BJ (cell line): ENCODE measurements at regions of chr10 and their contacts with region 1.

Region 1: DNA sequence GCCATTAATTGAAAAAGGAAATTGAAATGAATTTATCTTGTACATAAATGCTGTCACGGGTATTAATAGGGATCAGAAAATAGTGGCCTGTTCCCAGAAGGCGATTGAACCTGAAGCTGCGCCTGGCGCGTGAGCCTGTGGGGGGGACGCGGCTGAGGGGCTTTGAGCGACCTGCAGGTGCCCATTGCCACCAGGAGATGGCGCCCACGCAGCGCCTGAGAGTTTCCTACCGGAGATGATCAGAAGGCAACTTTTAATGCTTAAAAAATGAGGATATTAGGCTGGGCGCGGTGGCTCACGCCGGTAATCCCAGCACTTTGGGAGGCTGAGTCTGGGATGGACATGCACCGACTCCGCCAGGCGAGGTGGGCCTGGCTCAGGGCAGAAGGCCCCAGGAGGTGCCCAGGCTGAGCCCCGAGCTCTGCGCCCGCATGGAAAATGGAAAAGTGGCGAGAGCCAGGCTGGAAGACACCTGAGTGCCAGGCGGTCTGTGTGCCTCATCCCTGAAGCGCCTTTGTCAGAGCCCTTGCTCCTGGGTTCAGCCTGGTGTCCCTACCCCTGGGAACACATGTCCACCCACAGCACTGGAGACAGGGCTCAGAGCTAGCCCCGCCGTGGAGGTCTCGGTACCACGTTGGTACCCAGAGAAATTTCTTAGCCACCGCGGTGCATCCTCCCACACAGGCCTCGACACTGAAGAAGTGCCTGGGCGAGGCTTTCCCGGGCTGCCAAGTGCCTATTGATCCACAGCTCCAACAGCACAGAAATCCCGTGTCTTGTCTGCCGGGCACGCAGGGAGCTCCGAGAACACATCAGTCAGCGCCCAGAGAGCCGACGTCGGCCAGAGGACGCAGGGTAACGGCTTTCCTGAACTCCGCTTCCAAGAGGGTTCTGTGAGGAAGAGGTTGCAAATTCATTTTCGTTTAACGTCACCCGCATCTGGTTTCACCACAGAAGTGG is 117.4 kb downstream of the INPP5A start:
- DNase-seq: no peak
- H3K4me3 ChIP-seq: no peak overlapping the region
- H3K27me3 ChIP-seq: no peaks in the 10 kb centered on the region
- CTCF ChIP-seq: peak; percentile 96

Region 2: DNA sequence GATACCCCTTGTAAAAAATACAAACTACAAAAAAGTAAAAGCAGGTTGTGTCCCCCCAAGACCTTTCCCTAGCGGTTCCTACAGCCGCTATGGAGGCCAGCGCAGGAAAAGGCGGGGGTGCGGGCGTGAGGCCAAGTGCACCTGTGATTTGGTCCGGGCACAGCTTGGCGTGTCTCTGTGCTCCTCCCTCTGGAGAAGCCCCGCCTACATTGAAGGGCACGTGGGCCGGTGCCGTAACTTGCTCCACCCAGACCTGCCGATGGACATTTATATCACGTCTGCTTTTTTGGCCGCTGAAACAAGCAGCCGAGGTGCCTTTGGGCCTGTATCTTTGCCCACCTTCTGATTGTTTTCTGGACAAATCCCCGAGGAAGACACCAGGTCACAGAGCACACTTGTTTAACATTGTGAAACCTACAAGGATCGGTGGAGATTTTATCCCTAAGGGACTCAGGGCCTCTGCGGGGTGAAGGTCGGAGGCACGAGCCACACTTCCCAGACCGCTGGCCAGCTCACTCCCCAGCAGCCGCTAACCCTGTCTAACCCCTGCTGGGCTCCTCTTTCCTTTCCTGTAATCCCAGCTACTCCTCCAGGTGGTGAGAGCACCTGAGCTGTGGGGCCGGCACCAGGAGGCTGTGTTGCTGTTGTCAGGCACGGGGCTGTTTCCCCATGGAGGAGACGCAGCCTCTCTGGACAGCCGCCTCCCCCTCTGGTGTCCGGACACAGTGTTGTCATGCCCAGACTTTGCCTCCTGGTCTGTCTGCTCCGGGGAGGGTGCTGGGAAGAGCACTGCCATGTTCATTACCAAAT is 136.2 kb before region 1 on chr10:
- CTCF ChIA-PET with region 1: no interaction called
- POLR2A ChIA-PET with region 1: no interaction called
- DNase-seq: no peak
- H3K4me3 ChIP-seq: no peak overlapping the region
- H3K27me3 ChIP-seq: no peaks in the 10 kb centered on the region
- CTCF ChIP-seq: no peak

Region 3: DNA sequence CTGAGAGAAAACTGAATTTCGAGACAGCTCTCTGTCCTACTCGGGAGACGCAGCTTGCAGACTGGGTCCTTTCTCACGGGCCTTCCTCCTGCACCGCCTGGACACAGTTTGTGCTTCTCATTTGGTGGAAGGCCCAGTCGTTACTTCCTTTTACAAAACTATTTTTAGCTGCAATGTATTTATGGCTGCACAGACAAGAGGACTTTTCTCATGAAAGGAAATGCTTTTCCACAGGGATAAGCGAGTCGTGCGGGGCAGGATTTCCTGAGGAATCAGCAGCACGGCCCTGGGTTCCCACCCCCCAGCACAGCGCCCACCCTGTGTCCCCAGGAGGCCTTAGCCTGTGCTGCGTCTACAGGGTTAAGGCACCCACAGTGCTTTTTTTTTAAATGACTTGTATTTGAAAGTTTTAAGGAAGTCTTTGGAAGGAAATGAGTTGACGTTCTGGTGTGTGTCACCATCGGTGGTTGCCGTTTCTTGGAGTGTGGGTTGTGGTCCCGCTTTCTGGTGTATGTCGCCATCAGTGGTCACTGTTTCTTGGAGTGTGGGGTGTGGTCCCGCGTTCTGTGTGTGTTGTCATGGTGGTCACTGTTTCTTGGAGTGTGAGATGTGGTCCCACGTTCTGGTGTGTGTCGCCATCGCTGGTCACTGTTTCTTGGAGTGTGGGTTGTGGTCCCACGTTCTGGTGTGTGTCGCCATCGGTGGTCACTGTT is 66.5 kb before region 1 on chr10:
- CTCF ChIA-PET with region 1: no interaction called
- POLR2A ChIA-PET with region 1: no interaction called
- DNase-seq: no peak
- H3K4me3 ChIP-seq: no peak overlapping the region
- H3K27me3 ChIP-seq: no peaks in the 10 kb centered on the region
- CTCF ChIP-seq: no peak

Region 4: DNA sequence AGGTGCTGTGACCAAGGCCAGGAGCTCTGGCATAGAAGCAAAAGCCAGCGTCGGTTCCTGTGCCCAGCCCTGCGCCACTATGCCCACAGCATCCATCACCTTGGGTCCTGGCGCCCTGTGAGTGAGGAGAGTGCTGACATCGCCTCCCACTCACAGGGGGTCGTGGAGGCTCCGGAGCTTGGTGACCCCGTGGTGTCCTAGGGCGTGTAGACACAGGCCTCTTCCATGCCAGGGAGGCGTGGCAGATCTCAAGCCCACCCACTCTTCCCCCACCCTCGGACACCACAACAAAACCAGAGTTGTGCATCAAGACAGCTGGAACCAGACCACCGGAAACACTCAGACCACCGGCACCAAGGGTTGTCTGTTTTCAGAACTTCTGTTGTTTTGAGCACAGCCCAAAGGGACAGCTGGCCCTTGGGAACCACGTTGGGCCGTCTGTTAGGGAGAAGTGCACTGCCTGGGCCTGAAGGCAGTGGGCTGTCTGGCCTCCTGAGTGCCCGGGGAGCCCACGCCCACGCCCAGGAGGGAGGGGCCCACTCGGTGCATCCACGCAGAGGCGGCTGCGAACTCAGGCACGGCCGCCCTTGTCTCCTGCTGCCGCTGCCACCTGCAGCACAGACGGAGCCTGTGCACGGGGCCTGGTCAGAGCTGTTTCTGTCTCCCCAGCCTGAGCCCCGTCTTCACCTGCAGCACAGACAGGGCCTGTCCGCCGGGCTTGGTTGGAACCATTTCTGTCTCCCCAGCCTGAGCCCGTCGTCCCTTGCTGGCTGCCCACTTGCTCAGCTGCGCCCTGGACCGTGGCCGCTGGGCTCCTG is 11.1 kb before region 1 on chr10:
- CTCF ChIA-PET with region 1: interaction called, 34 read pairs
- POLR2A ChIA-PET with region 1: no interaction called
- DNase-seq: no peak
- H3K4me3 ChIP-seq: no peak overlapping the region
- H3K27me3 ChIP-seq: no peaks in the 10 kb centered on the region
- CTCF ChIP-seq: no peak

Region 5: GRCh38 chr10:132665946-132666704 is 11.1 kb after region 1 on chr10:
- CTCF ChIA-PET with region 1: interaction called, 13 read pairs
- POLR2A ChIA-PET with region 1: no interaction called
- DNase-seq: peak; percentile 86
- H3K4me3 ChIP-seq: no peak overlapping the region
- H3K27me3 ChIP-seq: no peaks in the 10 kb centered on the region
- CTCF ChIP-seq: no peak